ENCODE measurements at regions of chr10 and their contacts with region 1.

Region 1: GRCh38 chr10:59376846-59377245 is 14.5 kb upstream of the FAM13C start:
- DNase-seq: no peak
- H3K4me3 ChIP-seq: no peak overlapping the region
- H3K27ac ChIP-seq: no peak overlapping the region
- H3K4me1 ChIP-seq: no peaks in the 10 kb centered on the region
- H3K27me3 ChIP-seq: no peaks in the 10 kb centered on the region
- CTCF ChIP-seq: no peak
- POLR2A ChIP-seq: no peak

Region 2: GRCh38 chr10:59273445-59273844 is 103.4 kb before region 1 on chr10:
- CTCF ChIA-PET with region 1: no interaction called
- POLR2A ChIA-PET with region 1: no interaction called
- dilution Hi-C with region 1: no loop called
- intact Hi-C with region 1: no loop called
- DNase-seq: no peak
- H3K4me3 ChIP-seq: no peak overlapping the region
- H3K27ac ChIP-seq: no peak overlapping the region
- H3K4me1 ChIP-seq: no peaks in the 10 kb centered on the region
- H3K27me3 ChIP-seq: no peaks in the 10 kb centered on the region
- CTCF ChIP-seq: no peak
- POLR2A ChIP-seq: no peak

Region 3: GRCh38 chr10:59325116-59325515 is 51.7 kb before region 1 on chr10:
- CTCF ChIA-PET with region 1: no interaction called
- POLR2A ChIA-PET with region 1: no interaction called
- dilution Hi-C with region 1: no loop called
- intact Hi-C with region 1: loop called (anchors 5 kb)
- DNase-seq: no peak
- H3K4me3 ChIP-seq: no peak overlapping the region
- H3K27ac ChIP-seq: no peak overlapping the region
- H3K4me1 ChIP-seq: no peaks in the 10 kb centered on the region
- H3K27me3 ChIP-seq: no peaks in the 10 kb centered on the region
- CTCF ChIP-seq: no peak
- POLR2A ChIP-seq: no peak